Left ventricle myocardium inferior (tissue), 1 donor: ENCODE measurements at regions of chr6 and their contacts with region 1.

Region 1: DNA sequence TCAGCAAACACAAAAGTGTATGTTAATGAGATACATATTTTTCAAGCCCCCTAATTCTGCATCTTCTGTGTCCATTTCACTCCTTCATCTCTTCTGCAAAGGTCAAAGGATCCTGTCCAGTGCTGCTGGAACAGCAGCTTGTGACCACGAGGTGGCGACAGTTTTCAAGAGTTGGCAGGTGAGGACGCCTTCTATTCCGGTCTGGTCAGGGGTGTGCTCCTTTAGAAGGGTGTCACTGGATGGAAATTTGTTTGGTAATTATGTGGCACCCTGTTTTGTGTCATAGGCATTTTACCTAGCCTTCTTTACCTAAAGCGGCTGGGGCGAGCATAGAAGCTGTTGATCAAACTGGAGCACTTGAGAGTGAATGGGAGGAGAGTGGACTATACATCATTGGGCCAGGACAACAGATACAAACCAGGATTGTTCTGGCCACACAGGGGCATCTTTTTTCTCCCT is 32.9 kb upstream of the ERVFRD-1 start:
- DNase-seq: peak; percentile 70
- H3K4me3 ChIP-seq: no peak overlapping the region
- H3K27ac ChIP-seq: no peak overlapping the region
- H3K4me1 ChIP-seq: no peaks in the 10 kb centered on the region
- H3K27me3 ChIP-seq: no peaks in the 10 kb centered on the region
- CTCF ChIP-seq: peak; percentile 94

Region 2: DNA sequence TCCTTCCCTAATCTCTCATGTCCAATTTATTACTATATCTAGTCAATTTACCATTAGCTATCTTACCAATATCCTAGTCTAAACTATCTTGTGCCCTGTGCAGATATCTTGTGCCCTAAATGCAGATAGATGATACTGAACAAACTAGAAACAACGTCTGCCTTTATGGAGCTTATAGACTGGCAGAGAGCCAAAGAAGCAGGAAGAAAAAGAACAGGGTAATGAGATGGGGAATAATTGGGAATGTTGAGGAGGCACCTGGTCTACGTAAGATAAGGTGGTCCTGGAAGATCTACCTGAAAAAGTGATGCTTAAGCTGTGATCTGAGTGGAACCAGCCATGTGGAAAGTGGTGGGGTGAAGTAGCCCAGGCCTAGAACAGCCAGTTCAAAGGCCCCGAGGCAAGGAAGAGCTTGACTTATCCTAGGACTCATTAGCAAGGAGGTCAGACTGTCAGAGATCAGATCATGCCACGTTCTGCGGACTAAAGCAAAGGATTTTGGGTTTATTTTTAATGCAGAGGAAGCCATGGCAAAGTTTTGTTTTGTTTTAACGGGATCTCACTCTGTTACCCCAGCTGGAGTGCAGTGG is 252.6 kb before region 1 on chr6:
- intact Hi-C with region 1: no loop called
- DNase-seq: no peak
- H3K4me3 ChIP-seq: no peak overlapping the region
- H3K27ac ChIP-seq: no peak overlapping the region
- H3K4me1 ChIP-seq: peaks cover 4% of the 10 kb centered on the region
- H3K27me3 ChIP-seq: peaks cover 15% of the 10 kb centered on the region
- CTCF ChIP-seq: no peak

Region 3: DNA sequence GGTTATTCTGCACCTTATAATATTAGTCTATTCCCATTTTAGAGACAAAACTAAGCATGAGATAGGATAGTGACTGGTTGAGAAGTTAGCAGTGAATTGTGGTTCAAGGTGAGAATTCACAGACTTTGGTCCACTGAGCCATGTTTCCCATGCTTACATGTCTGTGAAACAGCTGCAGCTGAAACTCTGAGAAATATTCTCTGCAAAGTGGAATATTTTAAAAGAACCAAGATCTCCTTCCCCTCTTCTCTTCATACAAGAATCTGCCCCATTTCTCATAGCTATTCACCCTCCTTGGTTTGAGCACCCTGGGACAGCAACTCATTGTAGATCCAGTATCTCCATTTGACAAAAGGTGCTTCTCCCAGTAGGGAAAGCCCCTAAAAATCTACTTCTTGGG is 322.9 kb after region 1 on chr6:
- intact Hi-C with region 1: no loop called
- DNase-seq: no peak
- H3K4me3 ChIP-seq: no peak overlapping the region
- H3K27ac ChIP-seq: no peak overlapping the region
- H3K4me1 ChIP-seq: no peaks in the 10 kb centered on the region
- H3K27me3 ChIP-seq: no peaks in the 10 kb centered on the region
- CTCF ChIP-seq: no peak

Region 4: DNA sequence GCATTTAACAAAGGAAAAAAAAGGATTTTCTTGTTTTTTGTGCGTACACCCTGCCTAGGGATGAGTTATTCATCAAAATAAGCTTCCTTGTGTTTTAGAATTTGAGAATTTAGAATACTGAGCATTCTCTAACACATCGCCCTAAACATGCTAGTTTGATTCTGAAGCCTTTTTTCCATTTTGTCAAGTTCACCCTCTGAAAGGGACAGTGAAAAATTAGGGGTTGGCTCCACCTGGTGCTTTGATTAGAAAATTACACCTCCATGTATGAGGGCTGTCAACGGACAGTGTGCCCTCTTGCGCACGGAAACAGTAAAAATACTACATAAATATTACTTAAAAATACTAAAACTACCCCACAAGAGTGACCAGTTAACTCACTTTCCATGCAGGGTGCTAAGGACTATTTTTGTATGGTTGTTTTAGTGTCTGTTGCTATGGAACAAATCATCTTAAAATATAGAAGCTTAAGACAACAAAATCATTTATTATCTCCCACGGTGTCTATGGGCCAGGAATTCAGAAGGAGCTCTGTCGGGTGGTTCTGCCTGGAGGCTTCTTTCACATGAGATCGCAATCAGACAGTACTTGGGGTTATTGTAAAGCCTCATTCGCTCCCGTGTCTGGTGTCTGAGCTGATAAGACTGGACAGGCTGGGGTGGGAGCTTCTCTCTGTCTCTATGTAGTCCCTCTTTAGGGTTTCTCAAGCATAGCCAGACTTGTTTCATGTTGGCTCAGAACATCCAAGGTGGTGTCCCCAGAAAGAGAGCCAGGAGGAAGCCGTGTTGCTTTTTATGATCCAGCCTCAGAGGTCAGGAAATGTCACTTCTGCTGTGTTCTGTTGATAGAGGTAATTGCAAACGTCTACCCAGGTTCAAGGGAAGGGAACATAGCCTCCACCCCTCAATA is 352.0 kb after region 1 on chr6:
- intact Hi-C with region 1: loop called (anchors 1 kb)
- DNase-seq: no peak
- H3K4me3 ChIP-seq: no peak overlapping the region
- H3K27ac ChIP-seq: peak overlapping the region; percentile 44
- H3K4me1 ChIP-seq: peaks cover 13% of the 10 kb centered on the region
- H3K27me3 ChIP-seq: no peaks in the 10 kb centered on the region
- CTCF ChIP-seq: peak; percentile 92